ENCODE measurements at regions of chr2 and their contacts with region 1.

Region 1: DNA sequence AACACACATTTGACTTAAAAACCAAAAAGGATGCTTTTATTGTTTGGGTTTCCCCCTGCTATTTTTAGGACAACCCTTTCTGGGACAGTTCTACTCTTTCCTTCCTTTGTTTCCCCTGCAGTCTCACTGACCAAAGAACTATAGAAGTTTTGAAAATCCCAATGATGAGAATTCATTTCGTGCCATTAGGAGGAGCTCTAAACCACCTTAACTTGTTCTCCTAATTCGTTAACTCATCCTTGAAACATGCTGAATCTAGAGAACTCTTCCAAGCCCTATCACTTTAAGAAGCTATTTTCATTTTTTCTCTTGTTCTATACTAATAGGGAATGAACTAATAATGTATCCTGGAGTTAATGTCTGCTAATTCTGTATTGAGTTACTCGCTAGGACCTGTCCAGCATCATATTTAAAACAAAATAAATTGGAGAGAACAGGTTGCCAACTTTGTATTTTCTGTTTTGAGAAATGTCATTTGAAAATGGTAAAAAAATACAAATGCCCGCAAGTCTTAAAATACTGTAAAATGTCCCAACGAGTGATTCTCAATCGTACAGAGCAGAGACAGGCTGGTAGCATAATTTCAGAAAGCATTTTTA is 62.9 kb downstream of the AFTPH start:
- DNase-seq: peak; percentile 78
- ATAC-seq: peak; percentile 49; the same call in 1 of the 2 replicates
- H3K4me3 ChIP-seq: no peak overlapping the region
- H3K27ac ChIP-seq: no peak overlapping the region
- H3K4me1 ChIP-seq: no peaks in the 10 kb centered on the region
- H3K27me3 ChIP-seq: no peaks in the 10 kb centered on the region
- CTCF ChIP-seq: peak; percentile 90

Region 2: GRCh38 chr2:64439194-64439593 is 147.8 kb before region 1 on chr2:
- CTCF ChIA-PET with region 1: no interaction called
- POLR2A ChIA-PET with region 1: no interaction called
- intact Hi-C with region 1: no loop called
- DNase-seq: no peak
- ATAC-seq: peak; percentile 38
- H3K4me3 ChIP-seq: no peak overlapping the region
- H3K27ac ChIP-seq: no peak overlapping the region
- H3K4me1 ChIP-seq: 0 out of 2 replicates have a peak, but pooled peaks cover 3% of the 10 kb centered on the region
- H3K27me3 ChIP-seq: no peaks in the 10 kb centered on the region
- CTCF ChIP-seq: no peak

Region 3: GRCh38 chr2:64632835-64633819 is 46.1 kb after region 1 on chr2:
- CTCF ChIA-PET with region 1: no interaction called
- POLR2A ChIA-PET with region 1: no interaction called
- intact Hi-C with region 1: no loop called
- DNase-seq: no peak
- ATAC-seq: no peak
- H3K4me3 ChIP-seq: no peak overlapping the region
- H3K27ac ChIP-seq: no peak overlapping the region
- H3K4me1 ChIP-seq: peaks cover 5% of the 10 kb centered on the region
- H3K27me3 ChIP-seq: no peaks in the 10 kb centered on the region
- CTCF ChIP-seq: no peak

Region 4: GRCh38 chr2:64644177-64645004 is 57.4 kb after region 1 on chr2:
- CTCF ChIA-PET with region 1: interaction called, 11 read pairs
- POLR2A ChIA-PET with region 1: interaction called, 5 read pairs
- intact Hi-C with region 1: no loop called
- DNase-seq: peak; percentile 80
- ATAC-seq: peak; percentile 68
- H3K4me3 ChIP-seq: peak overlapping the region; percentile 67
- H3K27ac ChIP-seq: peak overlapping the region; percentile 92
- H3K4me1 ChIP-seq: peaks cover 87% of the 10 kb centered on the region
- H3K27me3 ChIP-seq: no peaks in the 10 kb centered on the region
- CTCF ChIP-seq: no peak

Region 5: GRCh38 chr2:64831134-64831976 is 244.4 kb after region 1 on chr2:
- CTCF ChIA-PET with region 1: no interaction called
- POLR2A ChIA-PET with region 1: no interaction called
- intact Hi-C with region 1: loop called (anchors 1 kb)
- DNase-seq: peak; percentile 99
- ATAC-seq: peak; percentile 90
- H3K4me3 ChIP-seq: peak overlapping the region; percentile 31; the same call in 1 of the 2 replicates
- H3K27ac ChIP-seq: peak overlapping the region; percentile 93
- H3K4me1 ChIP-seq: peaks cover 61% of the 10 kb centered on the region
- H3K27me3 ChIP-seq: no peaks in the 10 kb centered on the region
- CTCF ChIP-seq: peak; percentile 96

Region 6: DNA sequence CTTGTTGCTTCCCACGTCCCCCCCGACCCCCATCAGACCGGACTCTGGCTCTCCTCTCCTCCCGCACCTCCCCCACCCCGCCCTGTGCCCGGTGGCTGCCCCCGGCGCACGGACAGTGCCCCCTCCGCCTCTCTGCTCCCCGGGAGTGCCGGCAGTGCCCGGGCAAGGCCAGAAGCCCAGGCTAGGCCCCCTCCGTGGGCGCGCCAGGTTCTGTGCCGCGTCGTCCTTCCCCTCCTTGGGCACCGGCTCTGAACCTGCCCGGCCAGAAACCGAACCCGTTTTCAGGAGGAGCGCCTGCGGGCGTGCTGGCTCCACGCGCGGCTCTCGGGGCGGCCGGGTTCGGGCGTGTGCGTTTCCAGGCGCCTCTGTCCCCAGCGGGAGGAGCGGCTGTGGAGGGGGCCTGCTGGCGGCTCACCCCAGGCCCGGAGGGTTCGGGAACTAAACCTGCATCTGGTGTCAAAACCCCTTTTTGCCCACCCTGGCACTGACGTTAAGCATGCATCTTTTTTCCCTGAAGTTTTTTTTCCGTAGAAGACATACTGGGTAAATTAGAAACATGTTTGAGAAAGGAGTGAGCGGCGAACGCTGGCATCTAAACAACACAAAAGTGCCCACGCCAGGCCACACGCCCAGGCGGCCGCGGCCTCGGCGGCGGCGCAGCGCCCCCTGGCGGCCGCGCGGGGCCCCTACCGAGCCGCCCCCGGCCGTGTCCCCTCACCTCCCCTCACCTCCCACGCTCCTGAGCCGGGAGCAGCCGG is 278.3 kb after region 1 on chr2:
- CTCF ChIA-PET with region 1: interaction called, 3 read pairs
- POLR2A ChIA-PET with region 1: no interaction called
- intact Hi-C with region 1: loop called (anchors 1 kb)
- DNase-seq: peak; percentile 73
- ATAC-seq: peak; percentile 82
- H3K4me3 ChIP-seq: peak overlapping the region; percentile 68
- H3K27ac ChIP-seq: peak overlapping the region; percentile 81
- H3K4me1 ChIP-seq: peaks cover 35% of the 10 kb centered on the region
- H3K27me3 ChIP-seq: no peaks in the 10 kb centered on the region
- CTCF ChIP-seq: peak; percentile 68

Region 7: GRCh38 chr2:64873472-64873924 is 286.5 kb after region 1 on chr2:
- CTCF ChIA-PET with region 1: interaction called, 5 read pairs
- POLR2A ChIA-PET with region 1: no interaction called
- intact Hi-C with region 1: loop called (anchors 1 kb)
- DNase-seq: peak; percentile 86
- ATAC-seq: peak; percentile 73
- H3K4me3 ChIP-seq: no peak overlapping the region
- H3K27ac ChIP-seq: no peak overlapping the region
- H3K4me1 ChIP-seq: peaks cover 21% of the 10 kb centered on the region
- H3K27me3 ChIP-seq: no peaks in the 10 kb centered on the region
- CTCF ChIP-seq: peak; percentile 96

Region 8: GRCh38 chr2:64888591-64889309 is 301.8 kb after region 1 on chr2:
- CTCF ChIA-PET with region 1: interaction called, 7 read pairs
- POLR2A ChIA-PET with region 1: no interaction called
- intact Hi-C with region 1: loop called (anchors 1 kb)
- DNase-seq: peak; percentile 96
- ATAC-seq: peak; percentile 98
- H3K4me3 ChIP-seq: no peak overlapping the region
- H3K27ac ChIP-seq: no peak overlapping the region
- H3K4me1 ChIP-seq: peaks cover 11% of the 10 kb centered on the region
- H3K27me3 ChIP-seq: no peaks in the 10 kb centered on the region
- CTCF ChIP-seq: peak; percentile 89